Mammary epithelial cell (primary cell): ENCODE measurements at regions of chr3 and their contacts with region 1.

Region 1: GRCh38 chr3:15726043-15726442 is 71.7 kb downstream of the ANKRD28 start:
- DNase-seq: peak; percentile 46
- H3K4me3 ChIP-seq: no peak overlapping the region
- H3K27ac ChIP-seq: peak overlapping the region; percentile 59
- H3K4me1 ChIP-seq: peaks cover 17% of the 10 kb centered on the region
- H3K27me3 ChIP-seq: no peaks in the 10 kb centered on the region
- CTCF ChIP-seq: no peak

Region 2: DNA sequence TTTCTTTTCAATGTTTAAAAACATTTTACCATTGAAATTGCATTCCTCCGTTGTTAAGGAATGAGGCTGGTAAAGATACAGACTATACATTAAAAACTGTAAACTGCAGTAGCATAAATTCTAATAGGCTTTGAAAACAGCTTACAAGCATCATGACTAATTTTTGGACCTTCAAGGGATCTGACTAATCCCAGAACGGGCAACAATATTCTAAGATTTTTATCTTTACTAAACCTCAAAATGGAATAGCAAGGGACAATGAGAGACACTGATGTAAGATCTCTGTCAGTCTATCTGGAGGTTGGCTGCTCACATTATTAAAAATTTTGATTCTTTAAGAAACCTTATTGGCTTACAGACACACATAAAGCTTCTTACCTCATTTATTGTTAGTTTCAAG is 49.8 kb before region 1 on chr3:
- CTCF ChIA-PET with region 1: no interaction called
- dilution Hi-C with region 1: loop called (anchors 5 kb)
- in situ Hi-C with region 1: no loop called
- intact Hi-C with region 1: no loop called
- DNase-seq: peak; percentile 35
- H3K4me3 ChIP-seq: no peak overlapping the region
- H3K27ac ChIP-seq: no peak overlapping the region
- H3K4me1 ChIP-seq: no peaks in the 10 kb centered on the region
- H3K27me3 ChIP-seq: no peaks in the 10 kb centered on the region
- CTCF ChIP-seq: no peak